GM12878 (cell line): ENCODE measurements at regions of chr3 and their contacts with region 1.

Region 1: GRCh38 chr3:34248352-34248751 is 449.9 kb downstream of the PDCD6IP start:
- DNase-seq: peak; percentile 42
- ATAC-seq: peak; percentile 94
- H3K4me3 ChIP-seq: no peak overlapping the region
- H3K27ac ChIP-seq: no peak overlapping the region
- H3K4me1 ChIP-seq: 0 out of 2 replicates have a peak, but pooled peaks cover 3% of the 10 kb centered on the region
- H3K27me3 ChIP-seq: no peaks in the 10 kb centered on the region
- CTCF ChIP-seq: no peak
- EP300 ChIP-seq: no peak
- POLR2A ChIP-seq: no peak
- RAD21 ChIP-seq: no peak

Region 2: GRCh38 chr3:34106879-34107278 is 141.5 kb before region 1 on chr3:
- CTCF ChIA-PET with region 1: interaction called, 3 read pairs
- POLR2A ChIA-PET with region 1: no interaction called
- RAD21 ChIA-PET with region 1: no interaction called
- SMC1A ChIA-PET with region 1: interaction called, 3 read pairs
- in situ Hi-C with region 1: no loop called
- intact Hi-C with region 1: loop called (anchors 1 kb)
- DNase-seq: peak; percentile 51
- ATAC-seq: peak; percentile 73
- H3K4me3 ChIP-seq: no peak overlapping the region
- H3K27ac ChIP-seq: peak overlapping the region; percentile 60
- H3K4me1 ChIP-seq: peaks cover 36% of the 10 kb centered on the region
- H3K27me3 ChIP-seq: no peaks in the 10 kb centered on the region
- CTCF ChIP-seq: peak; percentile 57 to 78 (median 69)
- EP300 ChIP-seq: no peak
- POLR2A ChIP-seq: no peak
- RAD21 ChIP-seq: peak; percentile 69

Region 3: DNA sequence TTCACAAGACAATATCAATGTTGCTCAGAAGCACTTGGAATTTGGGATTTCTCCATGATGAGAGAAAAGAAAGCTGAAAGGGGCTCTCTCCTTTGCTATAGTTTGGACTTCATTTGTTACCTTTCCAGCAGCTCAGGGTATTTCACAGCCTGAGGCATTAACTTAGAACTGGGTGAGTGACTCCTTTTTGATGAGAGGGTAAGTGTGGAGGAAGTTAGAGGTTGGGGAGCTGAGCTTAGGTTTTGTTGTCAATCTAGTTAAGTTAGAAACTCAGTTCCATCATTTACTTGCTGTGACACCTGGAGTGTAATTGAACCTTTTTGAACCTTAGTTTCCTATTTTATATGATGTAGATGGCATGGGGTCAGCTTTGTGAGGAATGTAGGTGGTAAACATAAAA is 90.9 kb before region 1 on chr3:
- CTCF ChIA-PET with region 1: no interaction called
- POLR2A ChIA-PET with region 1: interaction called, 11 read pairs
- RAD21 ChIA-PET with region 1: no interaction called
- SMC1A ChIA-PET with region 1: no interaction called
- in situ Hi-C with region 1: no loop called
- intact Hi-C with region 1: no loop called
- DNase-seq: no peak
- ATAC-seq: no peak
- H3K4me3 ChIP-seq: no peak overlapping the region
- H3K27ac ChIP-seq: no peak overlapping the region
- H3K4me1 ChIP-seq: peaks cover 3% of the 10 kb centered on the region
- H3K27me3 ChIP-seq: no peaks in the 10 kb centered on the region
- CTCF ChIP-seq: no peak
- EP300 ChIP-seq: no peak
- POLR2A ChIP-seq: no peak
- RAD21 ChIP-seq: no peak

Region 4: GRCh38 chr3:34544136-34544535 is 295.8 kb after region 1 on chr3:
- CTCF ChIA-PET with region 1: no interaction called
- POLR2A ChIA-PET with region 1: no interaction called
- RAD21 ChIA-PET with region 1: no interaction called
- SMC1A ChIA-PET with region 1: no interaction called
- in situ Hi-C with region 1: no loop called
- intact Hi-C with region 1: no loop called
- DNase-seq: no peak
- ATAC-seq: no peak
- H3K4me3 ChIP-seq: no peak overlapping the region
- H3K27ac ChIP-seq: no peak overlapping the region
- H3K4me1 ChIP-seq: no peaks in the 10 kb centered on the region
- H3K27me3 ChIP-seq: no peaks in the 10 kb centered on the region
- CTCF ChIP-seq: no peak
- EP300 ChIP-seq: no peak
- POLR2A ChIP-seq: no peak
- RAD21 ChIP-seq: no peak